Sciatic nerve (tissue), 2 donors: ENCODE measurements at regions of chr19 and their contacts with region 1.

Region 1: DNA sequence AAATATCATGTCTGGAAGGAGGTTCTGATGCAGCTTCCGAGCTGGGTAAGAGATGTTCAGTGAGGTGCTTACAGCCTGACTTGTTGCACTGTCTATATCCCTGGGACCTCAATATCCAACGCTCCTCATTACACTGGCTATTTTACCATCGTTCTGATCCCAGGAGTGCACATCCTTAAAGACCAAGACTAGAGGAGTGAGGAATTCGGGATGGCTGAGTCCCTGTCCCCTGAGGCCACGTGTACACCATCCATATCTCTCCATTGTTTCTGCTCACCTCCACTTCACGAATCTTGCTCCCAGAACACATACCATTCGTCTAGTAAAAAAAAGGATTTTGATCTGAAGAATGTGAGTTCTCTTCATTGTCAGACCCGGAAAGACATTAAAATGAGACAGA is at the start of gene OR7G2:
- DNase-seq: no peak
- ATAC-seq: no peak
- total RNA-seq, gene OR7G2: not detected

Region 2: DNA sequence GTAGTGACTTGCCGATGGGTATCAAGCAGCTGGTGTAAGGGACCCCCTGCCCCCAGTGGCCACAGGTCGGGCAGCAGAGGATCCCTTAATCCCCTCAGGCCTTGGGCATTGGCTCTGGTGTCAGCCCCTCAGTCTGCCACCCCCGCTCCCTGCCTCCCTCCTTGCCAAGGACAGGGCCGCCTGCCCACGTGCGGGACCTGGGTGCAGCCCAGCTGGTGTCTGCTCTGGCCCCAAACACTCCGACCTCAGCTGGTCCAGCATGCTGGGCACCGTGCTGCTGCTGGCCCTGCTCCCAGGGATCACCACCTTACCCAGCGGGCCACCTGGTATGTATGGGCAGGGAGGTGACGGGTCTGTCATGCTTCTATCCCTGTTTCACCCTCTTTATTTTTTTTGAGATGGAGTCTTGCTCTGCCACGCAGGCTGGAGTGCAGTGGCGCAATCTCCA is 1192.8 kb before region 1 on chr19 and contains the start of gene TGFBR3L:
- intact Hi-C with region 1: loop called (anchors 5 kb)
- DNase-seq: no peak
- ATAC-seq: no peak
- total RNA-seq, gene TGFBR3L: not detected